Activated T-helper 1 cell treated with anti-CD3 and anti-CD28 coated beads, Interleukin-12 subunit alpha, Interleukin-12 subunit beta, Interleukin-2, Interleukin-4 antibody, amounts not matched to agents 30 ng/mL and 10 ng/mL and 1 ng/mL, durations not matched to agents 14 hours and 24 hours and 36 hours (primary cell): ENCODE measurements at regions of chr11 and their contacts with region 1.

Region 1: DNA sequence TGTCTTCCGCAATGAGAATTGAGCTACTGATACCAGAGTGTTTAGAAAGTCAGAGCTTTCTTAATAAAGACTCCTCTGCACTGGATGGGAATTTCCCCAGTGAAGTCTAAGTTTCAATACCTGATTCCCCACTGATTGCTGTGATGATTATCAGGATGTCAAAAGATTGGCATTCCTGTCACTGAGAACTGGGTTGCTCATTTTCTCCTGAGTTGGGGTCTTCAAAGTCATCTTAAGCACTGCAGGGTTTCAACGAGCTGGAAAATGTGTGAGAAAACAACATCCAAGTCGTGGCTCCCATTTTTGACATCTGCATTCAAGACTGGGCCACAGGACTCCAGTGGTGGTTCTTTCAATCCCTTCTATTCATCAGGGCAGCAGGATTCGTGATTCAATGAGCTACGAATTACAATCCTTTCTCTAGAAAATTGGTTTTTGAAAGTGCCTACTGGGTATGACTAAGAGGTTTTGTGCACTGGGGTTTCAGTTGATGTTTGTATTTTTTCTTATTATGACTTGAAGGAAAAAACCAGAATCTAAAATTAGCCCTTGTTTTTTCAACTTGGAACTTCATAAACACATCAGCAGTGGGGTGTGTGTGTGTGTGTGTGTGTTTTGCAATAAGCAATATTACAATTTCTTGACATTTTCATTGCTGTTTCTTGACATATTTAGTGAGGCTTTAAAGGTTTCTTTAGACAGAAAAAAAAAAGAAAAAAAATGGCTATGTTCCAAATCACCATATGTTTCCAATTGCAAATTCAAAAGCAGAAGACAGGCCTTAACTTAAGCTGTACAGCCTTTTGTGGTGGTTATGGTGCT is 233.0 kb downstream of the FAM76B start:
- DNase-seq: peak; percentile 6
- H3K4me3 Mint-ChIP-seq: peak overlapping the region; percentile 38
- H3K27ac Mint-ChIP-seq: peak overlapping the region; percentile 86
- H3K4me1 Mint-ChIP-seq: peaks cover 55% of the 10 kb centered on the region
- H3K27me3 Mint-ChIP-seq: no peaks in the 10 kb centered on the region

Region 2: GRCh38 chr11:95231127-95231880 is 325.2 kb before region 1 on chr11 and contains the start of gene SESN3:
- intact Hi-C with region 1: loop called (anchors 1 kb)
- DNase-seq: peak; percentile 98
- H3K4me3 Mint-ChIP-seq: peak within 1 kb of the TSS; percentile 96
- H3K27ac Mint-ChIP-seq: peak within 1 kb of the TSS; percentile 88
- H3K4me1 Mint-ChIP-seq: peaks cover 18% of the 10 kb centered on the region
- H3K27me3 Mint-ChIP-seq: peaks cover 2% of the 10 kb centered on the region
- total RNA-seq, gene SESN3: 62.0 and 68.6 TPM in 2 replicates

Region 3: GRCh38 chr11:95443386-95443785 is 113.2 kb before region 1 on chr11:
- intact Hi-C with region 1: no loop called
- DNase-seq: no peak
- H3K4me3 Mint-ChIP-seq: no peak overlapping the region
- H3K27ac Mint-ChIP-seq: no peak overlapping the region
- H3K4me1 Mint-ChIP-seq: peaks cover 10% of the 10 kb centered on the region
- H3K27me3 Mint-ChIP-seq: peaks cover 3% of the 10 kb centered on the region

Region 4: DNA sequence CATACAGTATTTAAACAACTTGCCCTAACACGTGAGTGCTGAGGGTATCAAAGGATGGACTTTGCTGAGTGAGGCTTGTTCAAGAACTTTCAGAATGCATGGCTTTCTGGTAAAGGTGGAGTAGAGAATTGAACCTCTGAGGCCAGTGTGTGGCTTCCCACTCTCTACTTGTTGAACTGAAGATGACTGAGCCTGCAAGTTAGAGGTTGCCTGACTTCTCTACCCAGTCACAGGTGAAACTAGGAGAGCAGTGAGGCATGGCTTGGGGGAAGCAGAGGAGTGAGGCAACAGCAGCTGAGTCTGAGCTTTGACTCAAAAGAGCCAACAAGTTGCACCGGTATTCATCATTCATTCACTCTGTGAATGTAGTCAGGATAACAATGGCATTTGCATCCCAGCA is 69.2 kb before region 1 on chr11:
- intact Hi-C with region 1: loop called (anchors 1 kb)
- DNase-seq: no peak
- H3K4me3 Mint-ChIP-seq: no peak overlapping the region
- H3K27ac Mint-ChIP-seq: no peak overlapping the region
- H3K4me1 Mint-ChIP-seq: peaks cover 11% of the 10 kb centered on the region
- H3K27me3 Mint-ChIP-seq: peaks cover 13% of the 10 kb centered on the region

Region 5: DNA sequence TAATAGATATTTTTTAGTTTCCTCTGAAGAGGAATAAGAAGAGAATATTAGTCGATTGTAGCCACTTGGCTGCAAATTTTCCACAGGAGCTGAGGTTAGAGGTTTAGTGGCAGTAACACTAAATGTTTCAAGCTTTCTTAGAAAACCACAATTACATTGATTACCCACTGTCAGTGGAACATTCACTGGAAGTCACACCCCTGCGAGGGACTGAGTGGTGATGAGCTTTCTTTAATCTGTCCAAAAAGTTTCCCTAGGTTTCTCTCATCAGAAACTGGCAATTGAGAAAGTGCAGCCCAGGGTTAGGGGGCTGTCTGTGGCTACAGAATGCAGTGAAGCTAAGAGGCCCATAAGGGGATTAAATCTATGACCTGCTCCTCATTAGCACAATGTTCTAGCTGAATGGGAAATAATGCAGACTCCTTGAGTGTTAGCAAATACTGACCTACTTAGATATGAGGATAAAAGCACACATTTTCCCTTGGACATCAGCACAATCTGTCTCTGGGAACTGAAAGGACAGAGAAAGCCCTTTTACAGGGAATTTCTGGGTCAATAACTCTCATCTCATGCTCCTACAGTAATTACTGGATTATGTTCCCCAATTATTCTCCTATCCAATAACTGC is 43.5 kb after region 1 on chr11:
- intact Hi-C with region 1: loop called (anchors 1 kb)
- DNase-seq: no peak
- H3K4me3 Mint-ChIP-seq: no peak overlapping the region
- H3K27ac Mint-ChIP-seq: peak overlapping the region; percentile 84
- H3K4me1 Mint-ChIP-seq: peaks cover 21% of the 10 kb centered on the region
- H3K27me3 Mint-ChIP-seq: no peaks in the 10 kb centered on the region

Region 6: DNA sequence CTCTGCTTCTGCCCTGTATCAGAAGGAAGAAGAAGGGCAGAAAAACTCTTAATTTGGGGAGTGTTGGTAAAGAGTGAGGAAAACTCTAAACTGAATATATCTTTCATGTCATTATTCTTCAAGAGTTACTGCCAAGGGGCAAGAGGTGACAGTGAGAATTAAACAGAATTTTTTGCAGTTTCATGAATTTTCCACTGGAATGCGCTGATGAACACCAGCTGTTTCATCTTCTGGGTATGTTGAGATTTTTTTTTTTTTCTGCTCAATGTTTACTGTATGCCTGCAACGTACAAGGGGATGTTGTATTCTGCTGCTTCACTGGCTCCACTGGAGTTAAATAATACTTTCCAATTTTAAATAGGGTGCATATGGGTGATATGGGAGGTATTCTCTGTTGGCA is 115.2 kb after region 1 on chr11:
- intact Hi-C with region 1: loop called (anchors 1 kb)
- DNase-seq: no peak
- H3K4me3 Mint-ChIP-seq: no peak overlapping the region
- H3K27ac Mint-ChIP-seq: no peak overlapping the region
- H3K4me1 Mint-ChIP-seq: peaks cover 27% of the 10 kb centered on the region
- H3K27me3 Mint-ChIP-seq: no peaks in the 10 kb centered on the region

Region 7: GRCh38 chr11:95699631-95700470 is 143.3 kb after region 1 on chr11:
- intact Hi-C with region 1: loop called (anchors 1 kb)
- DNase-seq: no peak
- H3K4me3 Mint-ChIP-seq: peak overlapping the region; percentile 73
- H3K27ac Mint-ChIP-seq: peak overlapping the region; percentile 95
- H3K4me1 Mint-ChIP-seq: peaks cover 68% of the 10 kb centered on the region
- H3K27me3 Mint-ChIP-seq: no peaks in the 10 kb centered on the region

Region 8: DNA sequence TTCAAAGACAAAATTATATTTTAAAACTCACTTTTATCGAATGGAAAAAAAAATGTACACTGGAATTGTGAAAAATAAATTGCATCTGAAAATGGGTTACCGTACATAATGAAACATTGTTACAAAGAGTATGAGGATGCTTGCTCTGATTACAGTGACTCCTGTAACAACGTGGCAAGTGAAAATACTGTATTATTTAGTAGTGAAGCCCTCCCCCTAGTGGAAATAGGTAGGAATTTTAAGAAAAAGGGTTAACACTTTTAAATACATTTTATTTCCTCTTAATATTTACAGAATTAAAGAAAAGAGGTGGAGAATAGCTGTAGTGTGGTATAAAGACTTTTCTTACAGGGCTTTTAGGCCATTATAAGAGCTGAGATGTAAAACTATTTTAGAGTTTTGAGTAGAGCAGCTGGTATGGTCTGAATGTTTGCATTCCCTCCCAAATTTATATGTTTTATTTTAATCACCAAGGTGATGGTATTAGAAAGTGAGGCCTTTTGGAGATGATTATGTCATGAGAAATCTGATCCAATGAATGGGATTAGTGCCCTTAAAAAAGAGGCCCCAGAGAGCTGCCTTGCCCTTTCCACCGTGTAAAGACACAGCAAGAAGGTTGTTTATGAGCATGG is 207.8 kb after region 1 on chr11:
- intact Hi-C with region 1: loop called (anchors 5 kb)
- DNase-seq: no peak
- H3K4me3 Mint-ChIP-seq: no peak overlapping the region
- H3K27ac Mint-ChIP-seq: no peak overlapping the region
- H3K4me1 Mint-ChIP-seq: no peaks in the 10 kb centered on the region
- H3K27me3 Mint-ChIP-seq: no peaks in the 10 kb centered on the region